ENCODE measurements at regions of chr16 and their contacts with region 1.

Region 1: DNA sequence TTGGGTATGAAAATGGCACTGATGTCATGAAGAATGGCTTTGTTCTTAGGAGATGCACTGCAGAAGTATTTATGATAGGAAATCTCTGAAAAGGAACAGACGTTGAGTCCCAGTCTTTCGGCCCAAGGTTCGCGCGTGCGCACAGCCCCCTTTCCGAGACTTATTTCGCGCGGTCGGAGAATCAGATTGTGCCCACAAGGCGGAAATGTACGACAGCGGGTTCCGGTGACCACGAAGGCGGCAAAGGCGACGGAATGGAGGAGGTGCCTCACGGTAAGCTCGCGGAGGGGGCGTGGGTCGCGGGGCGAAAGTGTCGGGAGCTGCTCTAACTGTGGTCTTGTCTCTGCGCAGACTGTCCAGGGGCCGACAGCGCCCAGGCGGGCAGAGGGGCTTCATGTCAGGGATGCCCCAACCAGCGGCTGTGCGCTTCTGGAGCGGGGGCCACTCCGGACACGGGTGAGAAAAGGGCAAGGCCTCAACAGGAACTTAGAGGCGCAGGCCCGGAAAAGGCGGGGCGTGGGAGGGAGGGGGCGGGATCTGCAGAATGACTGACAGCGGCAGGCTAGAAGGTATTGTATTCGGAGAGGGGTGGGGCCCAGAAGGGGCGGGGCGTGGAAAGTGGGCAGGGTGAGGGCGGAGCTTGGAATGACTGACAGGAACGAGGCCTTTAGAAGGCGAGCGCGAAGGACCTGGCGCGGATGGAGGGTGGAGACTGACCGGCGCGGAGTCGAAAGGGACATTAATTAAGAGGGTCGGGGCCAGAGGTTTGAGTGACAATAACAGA is at the start of gene NUBP1:
- DNase-seq: peak; percentile 99
- H3K4me3 Mint-ChIP-seq: peak within 1 kb of the TSS; percentile 92
- H3K27ac Mint-ChIP-seq: peak within 1 kb of the TSS; percentile 96
- H3K4me1 Mint-ChIP-seq: peaks cover 42% of the 10 kb centered on the region
- H3K27me3 Mint-ChIP-seq: no peaks in the 10 kb centered on the region
- CTCF ChIP-seq: no peak
- total RNA-seq, gene NUBP1: 35.7 and 35.9 TPM in 2 replicates

Region 2: GRCh38 chr16:10683170-10683569 is 60.6 kb before region 1 on chr16:
- CTCF ChIA-PET with region 1: no interaction called
- intact Hi-C with region 1: no loop called
- DNase-seq: no peak
- H3K4me3 Mint-ChIP-seq: no peak overlapping the region
- H3K27ac Mint-ChIP-seq: no peak overlapping the region
- H3K4me1 Mint-ChIP-seq: peaks cover 4% of the 10 kb centered on the region
- H3K27me3 Mint-ChIP-seq: peaks cover 31% of the 10 kb centered on the region
- CTCF ChIP-seq: no peak

Region 3: GRCh38 chr16:10876799-10877341 is 133.1 kb after region 1 on chr16 and contains the start of gene CIITA:
- CTCF ChIA-PET with region 1: no interaction called
- intact Hi-C with region 1: loop called (anchors 2 kb)
- DNase-seq: peak; percentile 71
- H3K4me3 Mint-ChIP-seq: peak within 1 kb of the TSS; percentile 96
- H3K27ac Mint-ChIP-seq: peak within 1 kb of the TSS; percentile 34
- H3K4me1 Mint-ChIP-seq: peaks cover 62% of the 10 kb centered on the region
- H3K27me3 Mint-ChIP-seq: no peaks in the 10 kb centered on the region
- CTCF ChIP-seq: no peak
- total RNA-seq, gene CIITA: 16.3 and 22.4 TPM in 2 replicates

Measured in Calu3 (cell line).